Heart left ventricle (tissue), 16 donors: ENCODE measurements at regions of chr2 and their contacts with region 1.

Region 1: DNA sequence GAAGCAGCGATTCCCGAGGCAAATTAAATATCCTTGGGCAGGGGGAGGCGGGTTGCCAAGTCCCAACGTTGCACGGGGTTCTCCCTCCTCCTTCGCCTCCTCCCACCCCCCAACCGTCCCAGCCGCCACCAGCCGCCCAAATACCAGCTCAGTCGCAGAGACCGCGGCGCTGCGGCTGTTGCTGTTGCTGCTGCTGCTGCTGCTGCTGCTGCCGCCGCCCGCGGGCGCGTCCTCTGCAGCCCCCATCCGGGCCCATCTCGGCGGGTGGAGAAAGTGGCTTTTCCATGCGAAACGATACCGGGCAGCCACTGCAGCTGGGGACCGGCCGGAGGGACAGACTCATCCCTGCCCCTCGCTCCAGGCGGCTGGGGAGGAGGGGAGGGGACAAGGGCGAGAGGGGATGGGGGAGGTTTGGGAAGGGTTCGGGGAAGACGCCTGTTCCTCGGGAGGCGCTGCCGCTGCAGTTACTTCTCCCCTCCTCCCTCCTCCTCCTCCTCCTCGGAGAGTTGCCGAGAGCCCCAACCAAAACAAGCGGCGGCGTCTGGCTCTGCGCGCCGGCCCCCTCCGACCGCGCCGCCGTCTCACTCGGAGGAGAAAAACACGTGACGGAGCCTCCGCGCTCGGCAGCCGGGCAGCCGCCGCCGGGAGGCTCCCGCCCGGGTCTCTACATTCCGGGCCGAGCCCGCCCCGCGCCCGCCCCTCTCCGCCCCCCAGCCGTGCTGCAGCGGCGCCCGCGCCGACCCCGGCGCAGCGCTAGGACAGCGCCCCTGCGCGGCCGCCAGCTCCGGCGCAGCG is at the start of gene IRS1:
- DNase-seq: peak; percentile 74 to 89 (median 81)
- ATAC-seq: peak in 3 of 4 donors; percentile 28 to 66 (median 54)
- H3K4me3 ChIP-seq: peak within 1 kb of the TSS; percentile 45 to 97 (median 82)
- H3K27ac ChIP-seq: peak within 1 kb of the TSS; percentile 69 to 98 (median 94)
- H3K4me1 ChIP-seq: peaks cover 0 to 63% (median 36%) of the 10 kb centered on the region in 12 donors
- H3K27me3 ChIP-seq: peaks cover 0 to 31% (median 0%) of the 10 kb centered on the region in 9 donors
- CTCF ChIP-seq: peak in 7 of 12 donors; percentile 25 to 68 (median 39)
- POLR2A ChIP-seq: peak in 1 of 2 donors; percentile 53
- total RNA-seq, gene IRS1: 13.4 to 45.8 (median 16.8) TPM

Region 2: DNA sequence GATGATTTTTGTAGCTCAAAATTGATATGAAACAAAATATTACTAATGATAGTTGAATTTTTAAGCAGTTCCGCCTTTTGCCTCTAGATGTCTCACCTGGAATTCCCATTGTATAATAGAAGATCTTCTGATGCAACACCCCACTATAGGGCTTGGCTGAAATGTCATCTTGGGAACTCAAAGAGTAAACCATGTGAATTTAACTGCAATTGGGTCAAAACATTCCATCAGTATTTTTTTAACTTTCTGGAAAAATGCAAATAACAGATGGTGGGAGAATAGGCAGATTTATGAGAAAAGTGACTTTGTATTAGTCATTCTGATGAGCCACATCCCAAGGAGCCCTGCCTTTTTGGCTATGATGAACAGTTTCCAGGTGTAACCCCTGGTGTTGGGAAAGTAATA is 909.9 kb before region 1 on chr2:
- intact Hi-C with region 1: loop called (anchors 1 to 5 kb)
- DNase-seq: peak in 1 of 5 donors; percentile 7
- ATAC-seq: peak in 2 of 4 donors; percentile 52 to 64
- H3K4me3 ChIP-seq: no peak overlapping the region
- H3K27ac ChIP-seq: no peak overlapping the region
- H3K4me1 ChIP-seq: no peaks in the 10 kb centered on the region
- H3K27me3 ChIP-seq: no peaks in the 10 kb centered on the region
- CTCF ChIP-seq: peak; percentile 49 to 86 (median 76)
- POLR2A ChIP-seq: no peak

Region 3: DNA sequence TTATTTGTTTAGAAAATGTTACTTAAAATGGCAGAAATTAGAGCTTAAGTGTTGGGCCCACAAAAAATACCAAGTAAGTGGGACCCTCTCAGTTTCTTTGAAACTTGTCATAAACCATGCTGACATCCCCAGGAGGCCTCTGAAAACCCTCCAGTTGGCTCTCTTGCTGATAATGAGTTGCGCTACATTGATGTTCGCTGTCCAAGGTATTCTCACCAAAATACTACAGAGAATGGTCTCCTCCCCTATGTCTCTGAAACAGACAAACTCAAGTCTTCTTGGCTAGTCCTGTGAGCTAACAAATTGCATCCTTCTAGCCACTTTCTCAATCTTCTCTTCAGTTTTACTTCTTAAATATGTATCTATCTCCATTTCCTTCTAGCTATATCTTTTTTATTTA is 669.2 kb before region 1 on chr2:
- intact Hi-C with region 1: loop called in 4 of 10 experiments (anchors 5 to 10 kb)
- DNase-seq: no peak
- ATAC-seq: no peak
- H3K4me3 ChIP-seq: no peak overlapping the region
- H3K27ac ChIP-seq: no peak overlapping the region
- H3K4me1 ChIP-seq: peaks cover 0 to 13% (median 0%) of the 10 kb centered on the region in 12 donors
- H3K27me3 ChIP-seq: no peaks in the 10 kb centered on the region
- CTCF ChIP-seq: no peak
- POLR2A ChIP-seq: no peak

Region 4: GRCh38 chr2:226554701-226555100 is 244.7 kb before region 1 on chr2:
- intact Hi-C with region 1: loop called in 3 of 10 experiments (anchors 5 to 10 kb)
- DNase-seq: no peak
- ATAC-seq: no peak
- H3K4me3 ChIP-seq: no peak overlapping the region
- H3K27ac ChIP-seq: no peak overlapping the region
- H3K4me1 ChIP-seq: peaks cover 0 to 9% (median 0%) of the 10 kb centered on the region in 12 donors
- H3K27me3 ChIP-seq: peaks cover 0 to 5% (median 0%) of the 10 kb centered on the region in 9 donors
- CTCF ChIP-seq: no peak
- POLR2A ChIP-seq: no peak

Region 5: DNA sequence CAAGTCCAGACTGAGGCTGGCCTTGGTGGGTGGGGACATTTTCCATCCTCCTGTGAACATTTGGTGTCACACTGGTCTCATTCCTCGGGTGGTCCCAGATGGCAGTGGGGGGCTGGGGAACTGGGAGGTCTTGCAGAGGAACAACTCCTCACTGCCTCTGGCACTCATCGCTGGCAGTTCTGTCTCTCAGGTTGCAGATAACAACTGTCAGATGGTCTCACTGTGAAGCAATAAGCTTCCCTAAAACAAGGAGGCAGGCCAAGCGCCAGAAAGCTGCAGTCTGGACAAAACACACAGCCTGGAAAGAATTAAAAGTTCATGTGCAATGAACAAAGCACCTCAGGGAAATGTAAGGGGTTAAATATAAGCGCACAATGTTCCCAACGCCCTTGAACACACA is 77.8 kb before region 1 on chr2:
- intact Hi-C with region 1: loop called in 5 of 10 experiments (anchors 5 kb)
- DNase-seq: peak; percentile 24 to 68 (median 53)
- ATAC-seq: peak in 1 of 4 donors; percentile 16
- H3K4me3 ChIP-seq: no peak overlapping the region
- H3K27ac ChIP-seq: no peak overlapping the region
- H3K4me1 ChIP-seq: peaks cover 0 to 37% (median 12%) of the 10 kb centered on the region in 12 donors
- H3K27me3 ChIP-seq: no peaks in the 10 kb centered on the region
- CTCF ChIP-seq: no peak
- POLR2A ChIP-seq: no peak

Region 6: GRCh38 chr2:226984750-226985582 is 185.6 kb after region 1 on chr2:
- intact Hi-C with region 1: loop called in 9 of 10 experiments (anchors 2 to 10 kb)
- DNase-seq: peak in 2 of 5 donors; percentile 29 to 37
- ATAC-seq: peak; percentile 60 to 87 (median 72)
- H3K4me3 ChIP-seq: no peak overlapping the region
- H3K27ac ChIP-seq: no peak overlapping the region
- H3K4me1 ChIP-seq: peaks cover 0 to 14% (median 6%) of the 10 kb centered on the region in 12 donors
- H3K27me3 ChIP-seq: no peaks in the 10 kb centered on the region
- CTCF ChIP-seq: peak; percentile 35 to 77 (median 66)
- POLR2A ChIP-seq: no peak